Prostate gland (tissue), 2 donors: ENCODE measurements at regions of chr22 and their contacts with region 1.

Region 1: GRCh38 chr22:40436505-40437451 is 66.4 kb downstream of the SGSM3 start:
- DNase-seq: no peak
- H3K4me3 ChIP-seq: no peak overlapping the region
- H3K27ac ChIP-seq: peak overlapping the region in 1 of 2 donors; percentile 35
- H3K4me1 ChIP-seq: no peaks in the 10 kb centered on the region
- H3K27me3 ChIP-seq: no peaks in the 10 kb centered on the region
- CTCF ChIP-seq: peak; percentile 19 to 78 (median 72)
- POLR2A ChIP-seq: no peak

Region 2: DNA sequence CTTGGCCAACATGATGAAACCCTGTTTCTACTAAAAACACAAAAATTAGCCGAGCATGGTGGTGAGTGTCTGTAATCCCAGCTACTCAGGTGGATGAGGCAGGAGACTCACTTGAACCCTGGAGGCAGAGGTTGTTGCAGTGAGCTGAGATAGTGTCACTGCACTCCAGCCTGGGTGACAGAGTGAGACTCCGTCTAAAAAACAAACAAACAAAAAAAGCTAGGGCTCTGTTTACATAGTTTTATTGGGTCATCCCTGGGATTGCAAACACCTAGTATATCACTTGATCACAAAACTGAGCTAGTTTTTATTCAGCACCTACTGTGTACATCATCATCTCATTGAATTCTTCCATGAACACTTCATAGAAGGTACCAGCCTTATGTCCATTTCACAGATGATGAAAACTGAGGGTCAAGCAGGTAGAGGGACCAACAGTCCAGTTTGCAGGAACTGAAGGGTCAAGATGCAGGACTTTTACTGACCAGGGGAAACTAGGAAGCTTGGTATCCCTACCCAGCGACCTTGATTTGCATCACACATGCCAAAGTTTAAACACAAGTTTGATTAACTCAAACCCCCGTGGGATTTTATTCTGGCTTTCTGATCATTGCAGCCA is 208.9 kb after region 1 on chr22:
- intact Hi-C with region 1: loop called (anchors 1 kb)
- DNase-seq: no peak
- H3K4me3 ChIP-seq: no peak overlapping the region
- H3K27ac ChIP-seq: peak overlapping the region; percentile 4 to 57
- H3K4me1 ChIP-seq: no peaks in the 10 kb centered on the region
- H3K27me3 ChIP-seq: no peaks in the 10 kb centered on the region
- CTCF ChIP-seq: no peak
- POLR2A ChIP-seq: no peak